Aorta (tissue), 5 donors: ENCODE measurements at regions of chr18 and their contacts with region 1.

Region 1: DNA sequence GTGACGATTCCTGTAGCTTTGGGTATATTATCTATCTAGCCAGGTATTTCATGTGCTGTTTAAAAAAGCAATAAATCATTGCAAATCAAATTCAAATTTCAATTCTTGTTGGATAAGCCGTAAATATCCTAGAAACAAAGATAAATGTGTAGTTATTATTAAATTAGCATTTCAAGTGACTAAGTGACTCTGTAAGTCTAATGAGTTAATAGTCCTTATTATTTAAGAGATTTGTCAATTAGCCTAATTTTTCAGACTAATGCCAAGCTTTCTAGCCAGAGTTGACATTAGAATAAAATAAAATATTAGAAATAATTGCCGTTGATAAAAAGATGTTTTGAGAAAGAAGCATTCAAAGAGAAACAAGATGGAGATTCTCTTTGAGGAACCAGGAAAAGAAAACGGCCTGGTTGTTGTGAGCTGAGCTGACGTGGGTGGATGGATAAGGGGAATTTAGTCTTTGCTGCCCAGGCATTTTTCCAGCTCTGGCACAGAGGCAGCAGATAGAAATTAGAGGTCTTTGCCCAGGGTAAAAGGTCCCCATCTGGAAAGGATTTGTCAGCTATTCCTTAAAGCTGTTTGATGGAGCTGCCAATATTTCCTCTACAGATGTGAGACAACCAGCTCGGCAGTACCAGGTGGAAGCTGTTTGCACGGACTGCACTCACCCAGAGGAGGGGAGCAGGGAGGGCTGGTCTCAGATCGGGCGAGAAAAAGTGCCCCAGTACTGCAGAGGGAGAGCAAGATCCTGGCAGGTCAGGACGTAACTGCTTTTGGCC is 117.3 kb upstream of the SEC11C start:
- DNase-seq: peak in 1 of 2 donors; percentile 64
- ATAC-seq: peak; percentile 28
- H3K4me3 ChIP-seq: no peak overlapping the region
- H3K27ac ChIP-seq: peak overlapping the region; percentile 91 to 94
- H3K4me1 ChIP-seq: peaks cover 2 to 6% of the 10 kb centered on the region in 2 donors
- H3K27me3 ChIP-seq: no peaks in the 10 kb centered on the region

Region 2: DNA sequence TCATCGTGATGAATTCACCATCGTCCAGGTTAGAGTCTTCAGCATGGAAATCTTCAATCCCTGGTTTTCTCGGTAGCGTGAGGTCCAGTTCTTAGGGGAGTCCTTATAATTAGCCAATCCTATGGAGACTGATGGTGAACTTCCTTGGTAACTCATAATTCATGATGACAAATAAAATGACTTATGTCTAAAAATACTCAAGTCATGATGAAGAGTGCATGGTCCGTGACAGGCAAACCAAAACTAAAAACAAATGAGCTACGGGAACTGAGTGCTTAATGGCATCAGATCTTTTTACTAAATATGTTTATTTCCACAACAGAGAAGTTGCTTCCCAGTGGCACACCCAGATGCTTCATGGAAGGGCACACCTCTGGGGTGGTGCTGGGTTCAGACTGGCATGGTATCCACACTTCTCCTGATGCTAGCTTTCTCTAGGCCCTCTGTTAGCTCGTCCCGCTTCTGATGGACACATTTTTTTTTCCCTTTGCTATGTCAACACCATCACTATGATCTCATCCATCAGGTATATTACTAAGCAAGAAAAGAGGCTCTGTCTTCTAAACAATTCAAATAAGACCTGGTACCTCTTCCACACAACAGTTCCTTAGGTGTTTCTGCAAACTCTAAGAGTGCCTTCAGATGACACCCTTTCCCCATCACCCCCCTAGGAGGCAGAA is 1071.1 kb before region 1 on chr18:
- intact Hi-C with region 1: no loop called
- DNase-seq: no peak
- ATAC-seq: no peak
- H3K4me3 ChIP-seq: no peak overlapping the region
- H3K27ac ChIP-seq: no peak overlapping the region
- H3K4me1 ChIP-seq: peaks cover 0 to 2% of the 10 kb centered on the region in 2 donors
- H3K27me3 ChIP-seq: no peaks in the 10 kb centered on the region

Region 3: GRCh38 chr18:58754544-58755068 is 267.8 kb before region 1 on chr18:
- intact Hi-C with region 1: no loop called
- DNase-seq: peak in 1 of 2 donors; percentile 82
- ATAC-seq: peak; percentile 26
- H3K4me3 ChIP-seq: no peak overlapping the region
- H3K27ac ChIP-seq: no peak overlapping the region
- H3K4me1 ChIP-seq: no peaks in the 10 kb centered on the region
- H3K27me3 ChIP-seq: no peaks in the 10 kb centered on the region

Region 4: DNA sequence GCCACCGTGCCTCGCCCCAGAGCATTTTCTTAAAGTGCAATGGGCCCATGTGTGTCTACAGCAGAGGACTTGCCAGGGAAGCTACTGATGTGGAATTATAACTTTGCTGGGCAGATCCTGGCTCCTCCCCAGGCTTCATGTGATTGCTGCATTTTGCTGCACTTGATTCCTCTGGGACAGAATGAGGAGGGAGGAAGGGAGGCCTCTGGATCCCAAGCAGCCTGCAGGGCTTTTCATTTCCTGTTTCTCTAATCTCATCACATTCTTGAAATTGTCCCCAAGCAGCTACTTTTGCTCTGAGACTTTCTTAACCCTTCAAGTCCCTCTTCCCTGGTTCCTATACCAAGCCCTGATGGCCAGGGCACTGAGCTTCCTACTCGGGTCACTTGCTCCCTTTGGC is 17.1 kb before region 1 on chr18:
- intact Hi-C with region 1: loop called in 1 of 2 experiments (anchors 2 kb)
- DNase-seq: peak in 1 of 2 donors; percentile 84
- ATAC-seq: peak; percentile 71
- H3K4me3 ChIP-seq: no peak overlapping the region
- H3K27ac ChIP-seq: peak overlapping the region; percentile 38 to 78
- H3K4me1 ChIP-seq: no peaks in the 10 kb centered on the region
- H3K27me3 ChIP-seq: no peaks in the 10 kb centered on the region